ENCODE measurements at regions of chr17 and their contacts with region 1.

Region 1: GRCh38 chr17:56715613-56716357 is 117.9 kb downstream of the C17orf67 start:
- DNase-seq: peak; percentile 74
- H3K4me3 ChIP-seq: no peak overlapping the region
- H3K27ac ChIP-seq: no peak overlapping the region
- H3K4me1 ChIP-seq: no peaks in the 10 kb centered on the region
- H3K27me3 ChIP-seq: peaks cover 0 to 2% of the 10 kb centered on the region in 2 experiments
- CTCF ChIP-seq: peak; percentile 75 to 80
- POLR2A ChIP-seq: no peak

Region 2: GRCh38 chr17:56125830-56126819 is 589.7 kb before region 1 on chr17:
- CTCF ChIA-PET with region 1: interaction called, 11 read pairs
- POLR2A ChIA-PET with region 1: no interaction called
- dilution Hi-C with region 1: no loop called
- intact Hi-C with region 1: loop called (anchors 1 kb)
- DNase-seq: peak; percentile 56
- H3K4me3 ChIP-seq: no peak overlapping the region
- H3K27ac ChIP-seq: no peak overlapping the region
- H3K4me1 ChIP-seq: no peaks in the 10 kb centered on the region
- H3K27me3 ChIP-seq: peaks cover 8 to 10% of the 10 kb centered on the region in 2 experiments
- CTCF ChIP-seq: peak; percentile 62 to 65
- POLR2A ChIP-seq: no peak

Region 3: GRCh38 chr17:56297184-56297583 is 418.6 kb before region 1 on chr17:
- CTCF ChIA-PET with region 1: no interaction called
- POLR2A ChIA-PET with region 1: no interaction called
- dilution Hi-C with region 1: no loop called
- intact Hi-C with region 1: no loop called
- DNase-seq: peak; percentile 7
- H3K4me3 ChIP-seq: no peak overlapping the region
- H3K27ac ChIP-seq: no peak overlapping the region
- H3K4me1 ChIP-seq: peaks cover 8% of the 10 kb centered on the region
- H3K27me3 ChIP-seq: peaks cover 7 to 8% of the 10 kb centered on the region in 2 experiments
- CTCF ChIP-seq: no peak
- POLR2A ChIP-seq: no peak

Region 4: DNA sequence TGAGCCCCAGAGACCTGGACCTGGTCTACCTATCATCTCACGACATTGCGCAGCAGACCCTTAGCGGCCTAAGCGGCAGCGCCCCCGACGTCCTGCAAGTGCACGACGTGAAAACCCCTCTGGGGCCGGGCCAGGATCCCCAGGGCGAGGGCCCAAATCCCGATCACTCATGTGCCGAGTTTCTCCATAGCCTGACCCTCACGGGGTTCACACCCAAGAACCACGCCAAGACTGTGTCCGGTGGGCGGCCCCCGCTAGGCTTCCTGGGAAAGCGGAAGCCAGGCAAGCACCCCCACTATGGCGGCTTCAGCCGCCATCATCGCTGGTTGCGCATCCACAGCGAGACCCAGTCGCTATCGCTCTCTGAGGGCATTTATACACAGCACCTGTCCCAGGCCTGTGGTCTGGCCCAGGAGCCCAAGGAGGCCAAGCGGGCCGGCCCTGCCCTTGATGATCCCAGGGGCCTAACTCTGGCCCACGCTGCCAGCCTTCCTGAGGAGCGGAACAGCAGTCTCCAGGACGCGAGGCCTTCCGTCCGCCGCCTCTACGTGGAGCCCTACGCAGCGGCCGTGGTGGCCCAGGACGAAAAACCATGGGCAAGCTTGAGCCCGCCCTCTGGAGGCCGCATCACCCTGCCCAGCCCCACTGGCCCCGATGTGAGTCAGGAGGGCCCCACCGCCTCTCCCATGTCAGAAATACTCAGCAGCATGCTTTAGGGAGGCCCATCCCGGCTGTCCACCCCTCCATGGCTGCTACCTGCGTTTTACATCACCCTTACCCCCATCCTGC is 205.0 kb before region 1 on chr17:
- CTCF ChIA-PET with region 1: interaction called, 13 read pairs
- POLR2A ChIA-PET with region 1: no interaction called
- dilution Hi-C with region 1: no loop called
- intact Hi-C with region 1: no loop called
- DNase-seq: no peak
- H3K4me3 ChIP-seq: no peak overlapping the region
- H3K27ac ChIP-seq: no peak overlapping the region
- H3K4me1 ChIP-seq: no peaks in the 10 kb centered on the region
- H3K27me3 ChIP-seq: peaks cover 0 to 4% of the 10 kb centered on the region in 2 experiments
- CTCF ChIP-seq: no peak
- POLR2A ChIP-seq: no peak

Region 5: DNA sequence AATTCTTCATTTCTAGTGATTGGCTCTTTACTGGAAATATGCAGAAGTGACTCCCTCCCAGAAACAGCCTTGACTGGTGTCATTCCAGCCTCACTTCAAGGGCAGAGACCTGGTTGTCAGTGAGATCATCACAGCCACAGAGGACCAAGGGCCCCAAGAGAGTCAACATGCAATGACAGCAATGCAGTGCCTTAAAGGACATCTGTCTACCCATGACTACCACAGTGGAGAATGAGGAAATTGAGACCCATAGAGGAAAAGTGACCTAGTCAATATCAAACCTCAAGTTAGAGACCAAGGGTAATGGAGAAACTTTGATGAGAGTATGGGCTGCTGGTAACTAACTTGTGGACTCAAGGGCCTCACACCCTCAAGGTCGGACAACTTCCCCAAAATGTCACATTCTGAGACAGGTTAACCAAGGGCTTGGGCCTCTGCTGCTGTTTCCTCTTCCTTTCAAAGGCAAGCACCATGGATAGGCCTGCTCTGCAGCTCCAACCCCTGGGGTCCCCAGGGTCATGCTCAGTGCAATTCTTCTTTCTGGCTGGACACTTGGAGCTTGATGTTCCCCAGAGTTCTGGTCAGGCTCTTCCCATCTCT is 111.0 kb before region 1 on chr17:
- CTCF ChIA-PET with region 1: interaction called, 45 read pairs
- POLR2A ChIA-PET with region 1: no interaction called
- dilution Hi-C with region 1: loop called (anchors 25 kb)
- intact Hi-C with region 1: no loop called
- DNase-seq: no peak
- H3K4me3 ChIP-seq: no peak overlapping the region
- H3K27ac ChIP-seq: no peak overlapping the region
- H3K4me1 ChIP-seq: no peaks in the 10 kb centered on the region
- H3K27me3 ChIP-seq: peaks cover 2 to 3% of the 10 kb centered on the region in 2 experiments
- CTCF ChIP-seq: no peak
- POLR2A ChIP-seq: no peak

Region 6: GRCh38 chr17:56679115-56679766 is 36.5 kb before region 1 on chr17:
- CTCF ChIA-PET with region 1: interaction called, 55 read pairs
- POLR2A ChIA-PET with region 1: no interaction called
- dilution Hi-C with region 1: no loop called
- intact Hi-C with region 1: loop called (anchors 1 kb)
- DNase-seq: peak; percentile 54
- H3K4me3 ChIP-seq: peak overlapping the region; percentile 19 to 58 (median 21)
- H3K27ac ChIP-seq: no peak overlapping the region
- H3K4me1 ChIP-seq: peaks cover 32% of the 10 kb centered on the region
- H3K27me3 ChIP-seq: peaks cover 27 to 38% of the 10 kb centered on the region in 2 experiments
- CTCF ChIP-seq: peak; percentile 60 to 61
- POLR2A ChIP-seq: no peak

Region 7: DNA sequence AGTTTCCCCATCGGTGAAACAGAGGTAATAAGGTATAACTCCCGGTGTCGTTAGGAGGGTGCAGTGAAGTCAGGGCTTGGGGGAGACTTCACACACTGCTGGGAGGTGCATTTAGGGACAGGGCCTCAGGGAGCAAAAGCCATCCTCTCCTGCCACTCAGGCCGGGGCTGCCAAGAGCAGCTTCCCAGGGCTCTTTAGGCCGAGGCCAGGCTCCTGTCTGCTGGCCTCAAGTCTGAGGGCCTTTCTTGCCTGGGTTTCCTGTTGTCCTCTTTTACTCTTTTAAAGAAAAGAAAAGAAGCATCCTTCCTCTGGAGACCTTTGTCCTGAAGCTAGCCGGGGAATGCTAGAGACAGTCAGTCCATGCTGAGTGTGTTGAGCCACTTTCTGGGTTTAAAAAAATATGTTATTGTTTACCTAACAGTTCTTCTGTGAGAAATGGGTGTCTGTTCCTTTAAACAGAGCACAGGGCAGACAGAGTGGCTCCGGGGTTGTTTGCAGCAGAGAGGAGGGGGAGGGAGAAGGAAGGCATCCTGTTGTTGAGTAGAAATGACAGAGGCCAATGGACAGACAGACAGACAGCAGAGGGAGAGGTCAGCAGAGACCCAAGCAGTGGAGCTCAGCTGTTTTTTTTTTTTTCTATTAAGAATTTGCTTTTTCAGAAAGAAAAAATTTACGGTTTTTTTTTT is 38.9 kb after region 1 on chr17:
- CTCF ChIA-PET with region 1: interaction called, 33 read pairs
- POLR2A ChIA-PET with region 1: no interaction called
- dilution Hi-C with region 1: no loop called
- intact Hi-C with region 1: no loop called
- DNase-seq: peak; percentile 53
- H3K4me3 ChIP-seq: no peak overlapping the region
- H3K27ac ChIP-seq: peak overlapping the region; percentile 86
- H3K4me1 ChIP-seq: peaks cover 47% of the 10 kb centered on the region
- H3K27me3 ChIP-seq: no peaks in the 10 kb centered on the region
- CTCF ChIP-seq: no peak
- POLR2A ChIP-seq: no peak

Region 8: DNA sequence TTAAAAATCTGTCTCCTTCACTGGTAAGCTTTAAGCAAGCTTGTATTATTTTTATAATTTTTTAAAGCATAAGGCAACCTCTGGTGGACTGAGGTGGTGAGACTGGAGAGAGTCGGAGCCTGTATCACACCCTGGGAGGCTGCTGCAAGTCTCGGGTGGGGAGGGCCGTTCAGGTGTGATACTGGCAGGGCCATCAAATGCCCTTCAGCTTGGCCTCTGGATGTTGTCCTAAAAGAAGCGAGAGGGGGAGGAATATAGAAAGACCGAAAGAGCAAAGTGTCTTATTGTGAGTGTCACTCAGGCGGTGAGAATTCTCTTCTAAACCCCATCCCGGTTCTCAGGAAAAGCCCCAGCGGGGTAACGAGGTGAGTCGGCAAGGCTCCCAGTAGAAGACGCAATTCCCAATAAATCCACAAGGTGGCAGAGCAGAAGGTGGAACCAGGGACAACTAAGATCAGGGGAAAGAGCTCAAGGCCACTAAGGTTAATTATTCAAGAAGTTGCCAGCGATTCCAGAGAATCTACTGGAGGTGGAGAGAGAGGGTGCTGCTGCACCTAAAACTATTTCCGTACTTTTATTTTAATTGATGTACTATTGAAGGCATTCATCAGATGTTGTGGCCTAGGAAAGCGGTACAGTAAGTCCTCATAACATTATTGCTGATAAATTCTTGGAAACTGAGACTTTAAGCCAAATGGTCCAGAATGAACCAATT is 103.8 kb after region 1 on chr17:
- CTCF ChIA-PET with region 1: interaction called, 11 read pairs
- POLR2A ChIA-PET with region 1: no interaction called
- dilution Hi-C with region 1: no loop called
- intact Hi-C with region 1: no loop called
- DNase-seq: peak; percentile 79
- H3K4me3 ChIP-seq: no peak overlapping the region
- H3K27ac ChIP-seq: no peak overlapping the region
- H3K4me1 ChIP-seq: peaks cover 24% of the 10 kb centered on the region
- H3K27me3 ChIP-seq: no peaks in the 10 kb centered on the region
- CTCF ChIP-seq: peak; percentile 67 to 80
- POLR2A ChIP-seq: no peak

Region 9: DNA sequence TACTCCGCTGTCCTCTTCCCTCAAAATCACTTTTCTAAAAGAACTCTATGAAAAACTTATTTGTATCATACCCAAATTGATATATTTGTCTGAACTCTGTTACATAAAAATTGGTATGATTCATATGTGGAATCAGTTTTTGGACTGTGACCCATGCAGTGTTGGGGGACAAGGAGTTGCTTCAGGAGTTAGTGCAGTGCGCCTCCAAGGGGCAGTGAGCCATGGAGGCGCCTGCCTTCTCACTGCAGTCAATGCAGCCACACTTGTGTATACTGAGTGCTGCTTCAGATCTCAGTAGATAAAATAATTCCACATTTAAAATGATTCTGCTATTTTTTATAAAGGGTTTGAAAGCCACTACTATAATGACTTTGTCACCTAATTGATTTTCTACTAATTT is 150.7 kb after region 1 on chr17:
- CTCF ChIA-PET with region 1: no interaction called
- POLR2A ChIA-PET with region 1: no interaction called
- dilution Hi-C with region 1: no loop called
- intact Hi-C with region 1: no loop called
- DNase-seq: peak; percentile 36
- H3K4me3 ChIP-seq: no peak overlapping the region
- H3K27ac ChIP-seq: no peak overlapping the region
- H3K4me1 ChIP-seq: peaks cover 19% of the 10 kb centered on the region
- H3K27me3 ChIP-seq: no peaks in the 10 kb centered on the region
- CTCF ChIP-seq: peak in 1 of 2 donors; percentile 6
- POLR2A ChIP-seq: no peak